Heart right ventricle (tissue), 16 donors: ENCODE measurements at regions of chr1 and their contacts with region 1.

Region 1: GRCh38 chr1:234533975-234534876 is 55.2 kb upstream of the TARBP1 start:
- DNase-seq: peak; percentile 89 to 95
- ATAC-seq: peak in 7 of 8 donors; percentile 6 to 60 (median 30)
- H3K4me3 ChIP-seq: peak overlapping the region in 1 of 10 donors; percentile 1
- H3K27ac ChIP-seq: peak overlapping the region; percentile 94 to 99 (median 98)
- H3K4me1 ChIP-seq: peaks cover 53 to 100% (median 97%) of the 10 kb centered on the region in 9 donors
- H3K27me3 ChIP-seq: no peaks in the 10 kb centered on the region
- CTCF ChIP-seq: no peak

Region 2: DNA sequence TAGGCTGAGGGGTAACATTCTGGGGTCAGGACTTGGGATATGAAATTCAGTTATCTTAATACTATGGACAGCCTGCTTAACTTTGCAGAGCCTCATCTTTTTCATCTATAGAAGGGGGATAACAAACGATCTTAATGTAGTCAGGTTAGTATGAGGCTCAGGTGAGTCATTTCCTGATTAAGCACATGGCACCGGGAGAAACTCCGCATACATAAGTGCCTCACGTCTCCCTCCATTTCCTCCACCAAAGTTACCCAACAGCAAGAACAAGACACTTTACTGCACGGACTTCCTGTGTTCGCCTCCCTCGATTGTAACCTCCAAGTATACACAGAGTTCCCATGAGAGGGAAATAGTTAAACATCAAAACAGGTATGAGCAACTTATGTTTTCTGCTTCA is 273.6 kb before region 1 on chr1:
- intact Hi-C with region 1: no loop called
- DNase-seq: no peak
- ATAC-seq: no peak
- H3K4me3 ChIP-seq: no peak overlapping the region
- H3K27ac ChIP-seq: no peak overlapping the region
- H3K4me1 ChIP-seq: no peaks in the 10 kb centered on the region
- H3K27me3 ChIP-seq: peaks cover 0 to 46% (median 18%) of the 10 kb centered on the region in 7 donors
- CTCF ChIP-seq: no peak

Region 3: DNA sequence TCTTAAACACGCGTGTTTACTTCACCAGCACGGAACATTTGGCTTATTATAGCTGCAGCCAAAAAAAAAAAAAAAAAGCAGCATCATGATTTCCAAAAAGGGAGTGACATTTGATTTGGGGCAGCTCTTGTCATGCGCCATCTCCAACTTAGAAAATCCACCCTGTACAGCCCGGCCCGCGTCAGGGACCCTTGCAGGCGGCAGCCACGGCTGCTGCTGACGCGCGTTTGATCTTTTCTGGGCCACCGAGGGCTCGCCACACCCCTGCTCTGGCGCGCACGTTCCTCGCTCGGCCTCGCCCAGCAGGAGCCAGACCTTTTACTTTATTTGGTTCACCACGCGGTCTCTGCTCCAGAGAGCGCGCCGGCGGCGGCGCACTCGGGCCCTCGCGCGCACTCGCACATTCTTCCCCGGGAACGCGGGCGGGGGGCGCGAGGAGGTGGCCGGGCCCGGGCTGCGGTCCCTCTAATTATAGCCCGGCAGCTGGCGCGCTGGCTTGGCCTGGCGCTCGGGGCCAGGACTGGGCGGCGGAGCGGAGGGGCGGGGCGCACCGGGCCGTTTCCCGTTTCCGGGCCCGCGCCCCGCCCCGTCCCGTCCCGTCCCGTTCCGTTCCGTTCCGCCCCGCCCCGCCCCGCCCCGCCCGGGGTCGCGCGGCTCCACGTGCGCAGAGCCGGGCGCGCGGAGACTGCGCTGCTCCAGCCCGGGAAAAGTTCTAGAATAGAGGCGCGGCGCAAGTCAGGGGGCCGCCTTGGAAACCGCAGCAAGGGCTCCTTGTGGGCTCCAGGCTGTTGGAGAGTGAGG is 65.6 kb after region 1 on chr1:
- intact Hi-C with region 1: loop called in 7 of 10 experiments (anchors 2 to 5 kb)
- DNase-seq: peak; percentile 89 to 91
- ATAC-seq: peak; percentile 82 to 97 (median 91)
- H3K4me3 ChIP-seq: peak overlapping the region in 9 of 10 donors; percentile 29 to 95 (median 51)
- H3K27ac ChIP-seq: peak overlapping the region; percentile 91 to 100 (median 99)
- H3K4me1 ChIP-seq: peaks cover 3 to 70% (median 54%) of the 10 kb centered on the region in 9 donors
- H3K27me3 ChIP-seq: no peaks in the 10 kb centered on the region
- CTCF ChIP-seq: peak in 3 of 9 donors; percentile 22 to 36 (median 25)

Region 4: GRCh38 chr1:234617986-234618736 is 83.9 kb after region 1 on chr1:
- intact Hi-C with region 1: no loop called
- DNase-seq: no peak
- ATAC-seq: peak in 4 of 8 donors; percentile 6 to 42 (median 26)
- H3K4me3 ChIP-seq: no peak overlapping the region
- H3K27ac ChIP-seq: peak overlapping the region in 6 of 10 donors; percentile 39 to 79 (median 44)
- H3K4me1 ChIP-seq: peaks cover 11 to 76% (median 43%) of the 10 kb centered on the region in 9 donors
- H3K27me3 ChIP-seq: no peaks in the 10 kb centered on the region
- CTCF ChIP-seq: no peak

Region 5: GRCh38 chr1:234918181-234918841 is 384.1 kb after region 1 on chr1:
- intact Hi-C with region 1: loop called in 4 of 10 experiments (anchors 5 to 10 kb)
- DNase-seq: peak; percentile 54 to 72
- ATAC-seq: peak; percentile 34 to 74 (median 66)
- H3K4me3 ChIP-seq: no peak overlapping the region
- H3K27ac ChIP-seq: peak overlapping the region; percentile 80 to 97 (median 88)
- H3K4me1 ChIP-seq: peaks cover 21 to 86% (median 78%) of the 10 kb centered on the region in 9 donors
- H3K27me3 ChIP-seq: no peaks in the 10 kb centered on the region
- CTCF ChIP-seq: no peak

Region 6: GRCh38 chr1:234978397-234979295 is 444.4 kb after region 1 on chr1:
- intact Hi-C with region 1: loop called in 1 of 10 experiments (anchors 10 kb)
- DNase-seq: no peak
- ATAC-seq: peak in 7 of 8 donors; percentile 28 to 52 (median 39)
- H3K4me3 ChIP-seq: peak overlapping the region in 2 of 10 donors; percentile 9 to 47
- H3K27ac ChIP-seq: peak overlapping the region; percentile 83 to 98 (median 88)
- H3K4me1 ChIP-seq: peaks cover 15 to 93% (median 54%) of the 10 kb centered on the region in 9 donors
- H3K27me3 ChIP-seq: no peaks in the 10 kb centered on the region
- CTCF ChIP-seq: peak in 3 of 9 donors; percentile 27 to 40 (median 28)

Region 7: DNA sequence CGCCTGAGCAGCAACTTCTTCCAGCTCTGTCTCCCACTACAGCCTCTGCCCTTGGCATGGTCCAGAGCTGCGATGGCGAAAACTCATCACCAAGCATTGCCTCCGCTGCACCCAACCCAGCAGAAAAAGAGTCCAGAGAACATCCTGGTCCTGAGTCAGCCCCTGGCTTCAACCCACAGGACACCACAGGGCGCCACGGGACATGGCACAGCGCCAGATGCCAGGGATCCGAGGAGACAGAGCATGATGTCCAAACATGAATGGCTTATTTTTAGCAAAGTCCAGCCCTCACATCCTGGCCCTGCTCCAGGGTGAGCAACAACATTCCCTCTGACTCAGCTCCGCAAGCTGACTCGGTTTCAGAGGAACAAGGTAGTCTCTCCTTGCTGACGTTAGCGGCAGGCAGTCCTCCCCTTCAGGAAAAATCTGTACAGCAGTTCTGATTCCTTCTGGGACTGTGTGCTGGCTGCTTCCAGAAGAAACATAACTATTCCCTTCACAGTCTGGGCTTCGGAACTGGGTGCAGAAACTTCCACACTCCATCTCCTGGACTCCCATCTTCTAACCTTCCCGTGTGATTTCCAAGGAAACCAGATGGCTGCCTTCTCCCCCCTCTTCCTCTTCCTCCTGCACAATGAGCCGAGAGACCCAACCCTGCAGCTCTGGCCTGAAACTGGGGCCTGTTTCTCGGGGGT is 463.1 kb after region 1 on chr1:
- intact Hi-C with region 1: loop called in 1 of 10 experiments (anchors 5 kb)
- DNase-seq: peak; percentile 97
- ATAC-seq: peak; percentile 91 to 98 (median 96)
- H3K4me3 ChIP-seq: peak overlapping the region in 5 of 10 donors; percentile 6 to 13 (median 12)
- H3K27ac ChIP-seq: peak overlapping the region; percentile 87 to 95 (median 92)
- H3K4me1 ChIP-seq: peaks cover 21 to 35% (median 30%) of the 10 kb centered on the region in 9 donors
- H3K27me3 ChIP-seq: no peaks in the 10 kb centered on the region
- CTCF ChIP-seq: no peak